ENCODE measurements at regions of chr2 and their contacts with region 1.

Region 1: GRCh38 chr2:176096986-176097819 is 2.4 kb upstream of the HOXD12 start:
- DNase-seq: peak; percentile 92
- H3K4me3 ChIP-seq: peak overlapping the region; percentile 45 to 70 (median 68)
- H3K27ac ChIP-seq: peak overlapping the region in 3 of 4 donors; percentile 92 to 96 (median 94)
- H3K4me1 ChIP-seq: peaks cover 0 to 41% (median 34%) of the 10 kb centered on the region in 4 donors
- H3K27me3 ChIP-seq: peaks cover 0 to 98% (median 35%) of the 10 kb centered on the region in 3 donors
- CTCF ChIP-seq: peak; percentile 70 to 95 (median 88)
- EP300 ChIP-seq: no peak
- POLR2A ChIP-seq: no peak

Region 2: DNA sequence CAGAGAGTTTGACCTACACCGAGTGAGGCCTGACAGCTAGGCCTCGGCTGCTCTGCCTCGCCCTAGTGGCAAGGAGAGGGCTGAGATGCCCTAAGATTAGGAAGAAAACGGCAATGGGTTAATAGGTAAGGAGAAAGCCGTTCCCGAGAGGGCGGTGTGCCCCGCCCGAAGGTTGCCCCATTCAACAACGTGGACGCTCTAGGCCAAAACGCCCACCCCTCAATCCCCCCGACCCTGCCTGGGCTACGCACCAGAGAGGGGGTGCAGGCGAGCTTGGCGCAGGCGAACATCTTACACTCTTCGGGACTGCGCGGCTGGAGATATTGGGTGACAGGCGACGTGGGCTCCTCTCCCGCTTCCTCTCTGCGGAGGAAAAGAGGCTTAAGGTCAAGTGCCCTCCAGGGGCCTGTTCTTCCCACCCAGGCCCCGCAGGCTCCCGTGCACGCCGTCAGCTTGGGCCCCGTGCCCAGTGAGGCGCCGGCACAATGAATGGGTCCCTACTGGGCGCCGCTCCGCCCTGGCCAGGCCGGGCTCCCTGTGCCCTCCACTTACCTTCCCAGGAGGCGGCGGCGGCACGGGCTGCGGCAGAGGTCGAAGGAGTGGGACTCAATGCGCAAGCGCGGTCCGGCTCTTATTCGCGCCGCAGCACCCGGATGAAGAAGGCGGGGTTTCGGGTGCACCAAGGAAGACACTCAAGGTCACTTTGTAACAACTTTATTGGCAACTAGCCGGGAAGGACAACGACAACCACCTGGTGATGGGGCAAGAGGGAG is 915.9 kb before region 1 on chr2 and contains the start of gene ATP5MC3:
- intact Hi-C with region 1: loop called (anchors 5 kb)
- DNase-seq: peak; percentile 98
- H3K4me3 ChIP-seq: peak within 1 kb of the TSS; percentile 85 to 87 (median 86)
- H3K27ac ChIP-seq: peak within 1 kb of the TSS; percentile 86 to 98 (median 92)
- H3K4me1 ChIP-seq: peaks cover 0 to 31% (median 11%) of the 10 kb centered on the region in 4 donors
- H3K27me3 ChIP-seq: no peaks in the 10 kb centered on the region
- CTCF ChIP-seq: peak in 2 of 4 experiments; percentile 12 to 40
- EP300 ChIP-seq: no peak
- POLR2A ChIP-seq: peak; percentile 90 to 95
- total RNA-seq, gene ATP5MC3: 97.5 to 233 (median 163) TPM

Region 3: GRCh38 chr2:175251425-175252041 is 845.7 kb before region 1 on chr2:
- intact Hi-C with region 1: loop called (anchors 5 kb)
- DNase-seq: no peak
- H3K4me3 ChIP-seq: no peak overlapping the region
- H3K27ac ChIP-seq: no peak overlapping the region
- H3K4me1 ChIP-seq: no peaks in the 10 kb centered on the region
- H3K27me3 ChIP-seq: no peaks in the 10 kb centered on the region
- CTCF ChIP-seq: peak in 3 of 4 experiments; percentile 26 to 53 (median 44)
- EP300 ChIP-seq: no peak
- POLR2A ChIP-seq: no peak

Region 4: DNA sequence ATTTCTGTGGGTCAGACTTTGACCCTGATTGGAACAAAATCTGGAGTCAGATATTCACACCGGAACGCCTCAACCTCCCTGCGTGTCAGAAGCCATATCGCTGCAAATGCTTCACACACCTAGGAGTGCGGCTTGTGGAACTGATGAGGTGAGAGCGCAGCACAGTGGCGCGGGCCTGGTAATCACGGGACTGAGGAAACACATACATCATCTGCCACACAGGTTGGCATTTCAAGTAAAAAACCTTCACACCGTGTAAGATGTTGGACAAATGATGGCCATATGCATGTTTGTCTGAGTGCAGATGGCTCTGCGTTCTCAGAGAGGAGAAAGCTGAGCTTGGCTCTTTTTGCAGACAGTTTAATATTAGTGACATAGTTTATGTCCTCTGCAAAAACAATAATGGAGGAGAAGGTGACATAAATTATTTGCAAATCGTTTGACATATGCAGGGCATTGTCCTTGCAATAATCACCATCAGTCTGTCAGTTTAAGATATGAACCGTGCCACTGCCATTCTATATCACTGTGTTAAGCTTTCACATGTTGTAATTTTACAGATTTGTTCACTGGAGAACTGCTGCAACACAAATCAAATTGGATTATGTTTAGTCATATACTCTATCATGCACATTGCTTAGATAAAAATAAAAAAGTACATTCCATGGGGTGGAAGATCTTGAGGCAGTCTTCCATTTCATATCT is 273.4 kb after region 1 on chr2:
- intact Hi-C with region 1: no loop called
- DNase-seq: no peak
- H3K4me3 ChIP-seq: no peak overlapping the region
- H3K27ac ChIP-seq: no peak overlapping the region
- H3K4me1 ChIP-seq: no peaks in the 10 kb centered on the region
- H3K27me3 ChIP-seq: no peaks in the 10 kb centered on the region
- CTCF ChIP-seq: no peak
- EP300 ChIP-seq: no peak
- POLR2A ChIP-seq: no peak